Mammary epithelial cell (primary cell): ENCODE measurements at regions of chr11 and their contacts with region 1.

Region 1: DNA sequence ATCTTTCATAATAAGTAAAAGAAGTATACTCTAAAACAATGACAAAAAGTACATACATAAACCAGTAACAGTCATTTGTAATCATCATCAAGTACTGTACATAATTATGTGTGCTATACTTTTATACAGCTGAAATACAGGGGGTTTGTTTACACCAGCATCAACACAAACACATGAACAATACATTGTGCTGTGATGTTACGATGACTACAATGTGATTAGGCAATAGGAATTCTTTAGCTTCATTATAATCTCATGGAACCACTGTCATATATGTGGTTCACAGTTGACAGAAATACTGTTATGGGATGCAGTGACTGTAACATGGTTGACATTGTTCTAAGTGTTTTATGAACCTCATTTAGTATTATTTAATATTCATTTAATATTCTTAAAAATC is 914.4 kb upstream of the TENM4 start:
- DNase-seq: no peak
- H3K4me3 ChIP-seq: no peak overlapping the region
- H3K27ac ChIP-seq: no peak overlapping the region
- H3K4me1 ChIP-seq: no peaks in the 10 kb centered on the region
- H3K27me3 ChIP-seq: no peaks in the 10 kb centered on the region
- CTCF ChIP-seq: no peak

Region 2: GRCh38 chr11:79829891-79830290 is 525.4 kb before region 1 on chr11:
- CTCF ChIA-PET with region 1: no interaction called
- dilution Hi-C with region 1: no loop called
- in situ Hi-C with region 1: no loop called
- intact Hi-C with region 1: loop called (anchors 5 kb)
- DNase-seq: no peak
- H3K4me3 ChIP-seq: no peak overlapping the region
- H3K27ac ChIP-seq: no peak overlapping the region
- H3K4me1 ChIP-seq: peaks cover 5% of the 10 kb centered on the region
- H3K27me3 ChIP-seq: peaks cover 3% of the 10 kb centered on the region
- CTCF ChIP-seq: no peak

Region 3: GRCh38 chr11:79940974-79941735 is 414.1 kb before region 1 on chr11:
- CTCF ChIA-PET with region 1: no interaction called
- dilution Hi-C with region 1: no loop called
- in situ Hi-C with region 1: no loop called
- intact Hi-C with region 1: no loop called
- DNase-seq: peak; percentile 2
- H3K4me3 ChIP-seq: no peak overlapping the region
- H3K27ac ChIP-seq: no peak overlapping the region
- H3K4me1 ChIP-seq: no peaks in the 10 kb centered on the region
- H3K27me3 ChIP-seq: no peaks in the 10 kb centered on the region
- CTCF ChIP-seq: no peak

Region 4: GRCh38 chr11:80668039-80668438 is 312.8 kb after region 1 on chr11:
- CTCF ChIA-PET with region 1: no interaction called
- dilution Hi-C with region 1: no loop called
- in situ Hi-C with region 1: no loop called
- intact Hi-C with region 1: no loop called
- DNase-seq: no peak
- H3K4me3 ChIP-seq: no peak overlapping the region
- H3K27ac ChIP-seq: no peak overlapping the region
- H3K4me1 ChIP-seq: no peaks in the 10 kb centered on the region
- H3K27me3 ChIP-seq: no peaks in the 10 kb centered on the region
- CTCF ChIP-seq: no peak